Panc1 (cell line): ENCODE measurements at regions of chr16 and their contacts with region 1.

Region 1: DNA sequence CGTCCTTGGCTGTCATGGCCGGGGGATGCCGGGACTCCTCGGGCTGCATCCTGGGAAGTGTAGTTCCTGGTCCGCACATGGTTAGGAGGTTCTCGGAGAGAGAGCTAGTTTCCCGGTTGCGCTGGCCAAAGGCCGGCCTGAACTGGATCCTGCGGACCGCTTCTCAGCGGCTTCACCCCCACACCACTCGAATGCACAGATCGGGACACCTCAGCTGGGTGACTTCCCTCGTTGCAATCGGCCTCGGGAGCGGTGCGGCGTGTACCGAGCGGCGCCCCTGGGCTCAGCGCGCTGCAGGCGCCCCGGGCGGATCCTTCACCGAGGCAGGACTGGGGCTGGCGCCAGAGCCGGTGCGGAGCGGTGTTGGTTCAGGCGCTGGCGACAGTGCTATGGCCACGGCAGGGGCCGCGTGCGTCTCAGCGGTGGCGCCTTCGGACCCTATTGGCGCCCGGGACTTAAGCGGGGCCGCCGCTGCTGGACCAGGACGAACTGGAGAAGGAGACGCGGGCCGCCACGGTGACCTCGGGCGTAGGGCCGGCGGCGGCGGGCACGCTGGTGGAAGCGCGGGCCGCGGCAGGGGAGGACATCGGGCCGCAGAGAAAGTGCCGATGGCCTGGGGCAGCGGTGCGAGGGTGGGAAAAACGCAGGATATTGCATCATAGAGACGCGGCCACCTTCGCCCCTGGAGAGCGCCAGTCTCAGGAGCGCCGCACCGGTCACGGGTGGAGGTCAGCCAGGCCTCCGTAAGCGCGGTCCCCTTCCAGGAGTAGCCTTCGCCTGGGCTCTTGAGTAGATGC is 11.4 kb downstream of the ZNF629 start:
- DNase-seq: peak; percentile 63
- ATAC-seq: peak; percentile 89
- H3K4me3 ChIP-seq: peak overlapping the region; percentile 68 to 94
- H3K27ac ChIP-seq: peak overlapping the region; percentile 98
- H3K4me1 ChIP-seq: peaks cover 17% of the 10 kb centered on the region
- H3K27me3 ChIP-seq: no peaks in the 10 kb centered on the region
- CTCF ChIP-seq: no peak

Region 2: GRCh38 chr16:30349675-30350074 is 425.9 kb before region 1 on chr16:
- CTCF ChIA-PET with region 1: no interaction called
- POLR2A ChIA-PET with region 1: interaction called, 13 read pairs
- in situ Hi-C with region 1: no loop called
- intact Hi-C with region 1: no loop called
- DNase-seq: no peak
- ATAC-seq: no peak
- H3K4me3 ChIP-seq: no peak overlapping the region
- H3K27ac ChIP-seq: no peak overlapping the region
- H3K4me1 ChIP-seq: peaks cover 28% of the 10 kb centered on the region
- H3K27me3 ChIP-seq: no peaks in the 10 kb centered on the region
- CTCF ChIP-seq: no peak

Region 3: DNA sequence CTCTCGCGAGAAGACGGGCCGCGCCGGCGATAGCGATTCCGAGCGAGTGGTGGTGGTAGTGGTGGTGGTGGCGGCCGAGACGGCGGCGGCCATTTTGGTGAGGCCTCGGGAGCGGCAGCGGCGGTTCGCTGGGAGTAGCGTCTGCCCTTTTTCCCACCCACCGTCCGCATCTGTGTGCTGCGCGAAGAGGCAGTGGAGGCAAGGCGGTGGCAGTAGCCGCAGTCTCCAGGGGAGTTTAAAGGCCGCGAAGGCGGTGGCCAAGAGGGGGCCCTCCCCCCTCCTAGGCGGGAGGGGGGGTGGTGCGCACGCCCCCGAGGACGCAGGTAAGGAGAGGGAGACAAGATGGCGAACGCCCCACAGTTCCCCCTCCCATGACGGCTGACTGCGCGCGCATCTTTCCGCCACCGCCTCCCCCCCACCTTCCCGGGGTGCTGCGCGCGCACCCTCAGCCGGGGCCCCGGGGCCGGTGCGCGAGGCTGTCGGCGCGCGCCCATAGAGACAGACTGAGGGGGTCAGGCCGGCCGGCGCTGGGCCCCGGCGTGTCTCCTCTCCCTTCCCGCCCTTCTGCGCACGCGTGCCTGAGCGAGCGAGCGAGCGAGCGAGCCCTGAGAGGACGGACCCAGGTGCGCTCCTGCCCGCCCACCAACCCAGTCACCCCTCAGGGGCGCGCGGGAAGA is 77.3 kb before region 1 on chr16:
- CTCF ChIA-PET with region 1: no interaction called
- POLR2A ChIA-PET with region 1: no interaction called
- in situ Hi-C with region 1: no loop called
- intact Hi-C with region 1: no loop called
- DNase-seq: peak; percentile 86
- ATAC-seq: peak; percentile 85
- H3K4me3 ChIP-seq: peak overlapping the region; percentile 83 to 91
- H3K27ac ChIP-seq: peak overlapping the region; percentile 97
- H3K4me1 ChIP-seq: peaks cover 19% of the 10 kb centered on the region
- H3K27me3 ChIP-seq: no peaks in the 10 kb centered on the region
- CTCF ChIP-seq: no peak

Region 4: DNA sequence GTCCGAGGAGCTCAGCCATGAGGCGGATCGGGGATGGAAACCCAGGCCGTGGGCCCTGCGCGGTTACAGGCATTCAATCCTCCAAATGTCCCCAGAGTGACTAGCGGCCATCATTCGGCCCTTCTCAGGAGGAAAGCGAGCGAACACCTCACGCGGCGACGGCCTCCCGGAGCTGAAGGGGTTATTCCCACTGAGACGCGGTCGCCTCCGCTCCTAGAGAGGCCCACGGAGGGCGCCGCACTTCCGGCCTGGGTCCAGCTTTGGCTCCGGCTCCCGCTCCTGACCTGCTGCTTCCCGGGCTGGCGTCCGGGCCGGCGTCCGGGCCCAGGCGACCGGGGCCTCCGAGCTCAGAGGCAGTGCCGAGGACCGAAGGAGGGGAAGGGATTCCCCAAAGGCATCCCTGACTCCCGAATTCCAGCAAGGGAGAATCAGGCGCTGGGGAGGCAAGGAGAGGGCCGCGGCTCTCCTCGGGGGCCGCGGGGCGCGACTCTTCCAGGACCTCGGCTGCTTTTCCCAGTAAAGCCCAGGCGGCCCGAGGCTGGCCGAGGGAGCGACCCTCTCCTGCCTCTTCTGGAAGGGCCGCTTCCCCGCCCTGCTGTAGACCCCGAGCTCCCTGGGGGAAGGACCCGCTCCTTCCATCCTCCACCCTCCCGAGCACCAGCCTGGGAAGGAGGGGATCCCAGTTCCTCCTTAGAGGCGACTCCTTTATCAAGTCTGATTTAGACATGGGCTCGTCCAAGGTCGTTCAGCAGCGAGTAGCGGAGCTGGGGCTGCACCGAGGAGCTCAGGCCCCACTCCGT is 30.0 kb after region 1 on chr16:
- CTCF ChIA-PET with region 1: no interaction called
- POLR2A ChIA-PET with region 1: interaction called, 17 read pairs
- in situ Hi-C with region 1: no loop called
- intact Hi-C with region 1: no loop called
- DNase-seq: no peak
- ATAC-seq: peak; percentile 94
- H3K4me3 ChIP-seq: peak overlapping the region; percentile 57 to 75
- H3K27ac ChIP-seq: peak overlapping the region; percentile 89
- H3K4me1 ChIP-seq: peaks cover 9% of the 10 kb centered on the region; the same call in 1 of the 2 replicates
- H3K27me3 ChIP-seq: no peaks in the 10 kb centered on the region
- CTCF ChIP-seq: no peak